ENCODE measurements at regions of chr17 and their contacts with region 1.

Region 1: GRCh38 chr17:40475234-40475908 is 26.1 kb downstream of the TNS4 start:
- DNase-seq: peak; percentile 7
- ATAC-seq: no peak
- H3K4me3 ChIP-seq: no peak overlapping the region
- H3K27ac ChIP-seq: no peak overlapping the region
- H3K4me1 ChIP-seq: peaks cover under 1% of the 10 kb centered on the region; the same call in 1 of the 2 replicates
- H3K27me3 ChIP-seq: no peaks in the 10 kb centered on the region
- CTCF ChIP-seq: no peak

Region 2: DNA sequence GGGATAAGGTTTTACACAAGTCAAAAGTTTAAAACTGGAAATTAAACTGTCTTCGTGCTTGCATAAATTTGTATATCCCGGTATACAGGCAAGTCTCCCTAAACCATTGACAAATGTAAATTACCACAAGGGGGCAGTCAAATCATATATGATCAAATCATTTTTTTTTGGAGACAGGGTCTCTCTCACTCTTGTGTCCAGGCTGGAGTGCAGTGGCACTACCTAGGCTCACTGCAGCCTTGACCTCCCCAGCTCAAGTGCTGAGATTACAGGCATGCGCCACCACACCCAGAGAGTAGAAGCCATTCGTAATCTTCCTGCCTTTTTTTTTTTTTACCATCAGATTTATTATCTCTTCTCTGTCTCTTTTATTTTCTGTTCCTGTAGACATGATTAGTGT is 76.2 kb before region 1 on chr17:
- CTCF ChIA-PET with region 1: no interaction called
- POLR2A ChIA-PET with region 1: no interaction called
- intact Hi-C with region 1: no loop called
- DNase-seq: peak; percentile 69
- ATAC-seq: peak; percentile 49; the same call in 1 of the 2 replicates
- H3K4me3 ChIP-seq: no peak overlapping the region
- H3K27ac ChIP-seq: no peak overlapping the region
- H3K4me1 ChIP-seq: no peaks in the 10 kb centered on the region
- H3K27me3 ChIP-seq: no peaks in the 10 kb centered on the region
- CTCF ChIP-seq: peak; percentile 65

Region 3: GRCh38 chr17:40410082-40410481 is 65.3 kb before region 1 on chr17:
- CTCF ChIA-PET with region 1: no interaction called
- POLR2A ChIA-PET with region 1: no interaction called
- intact Hi-C with region 1: no loop called
- DNase-seq: no peak
- ATAC-seq: no peak
- H3K4me3 ChIP-seq: no peak overlapping the region
- H3K27ac ChIP-seq: no peak overlapping the region
- H3K4me1 ChIP-seq: no peaks in the 10 kb centered on the region
- H3K27me3 ChIP-seq: no peaks in the 10 kb centered on the region
- CTCF ChIP-seq: no peak

Region 4: GRCh38 chr17:40432864-40433528 is 42.4 kb before region 1 on chr17:
- CTCF ChIA-PET with region 1: no interaction called
- POLR2A ChIA-PET with region 1: no interaction called
- intact Hi-C with region 1: no loop called
- DNase-seq: no peak
- ATAC-seq: no peak
- H3K4me3 ChIP-seq: no peak overlapping the region
- H3K27ac ChIP-seq: no peak overlapping the region
- H3K4me1 ChIP-seq: no peaks in the 10 kb centered on the region
- H3K27me3 ChIP-seq: no peaks in the 10 kb centered on the region
- CTCF ChIP-seq: no peak

Region 5: GRCh38 chr17:40443583-40444327 is 31.6 kb before region 1 on chr17:
- CTCF ChIA-PET with region 1: interaction called, 12 read pairs
- POLR2A ChIA-PET with region 1: no interaction called
- intact Hi-C with region 1: no loop called
- DNase-seq: peak; percentile 62
- ATAC-seq: peak; percentile 60
- H3K4me3 ChIP-seq: peak overlapping the region; percentile 93
- H3K27ac ChIP-seq: no peak overlapping the region
- H3K4me1 ChIP-seq: peaks cover 18% of the 10 kb centered on the region
- H3K27me3 ChIP-seq: no peaks in the 10 kb centered on the region
- CTCF ChIP-seq: peak; percentile 38

Region 6: DNA sequence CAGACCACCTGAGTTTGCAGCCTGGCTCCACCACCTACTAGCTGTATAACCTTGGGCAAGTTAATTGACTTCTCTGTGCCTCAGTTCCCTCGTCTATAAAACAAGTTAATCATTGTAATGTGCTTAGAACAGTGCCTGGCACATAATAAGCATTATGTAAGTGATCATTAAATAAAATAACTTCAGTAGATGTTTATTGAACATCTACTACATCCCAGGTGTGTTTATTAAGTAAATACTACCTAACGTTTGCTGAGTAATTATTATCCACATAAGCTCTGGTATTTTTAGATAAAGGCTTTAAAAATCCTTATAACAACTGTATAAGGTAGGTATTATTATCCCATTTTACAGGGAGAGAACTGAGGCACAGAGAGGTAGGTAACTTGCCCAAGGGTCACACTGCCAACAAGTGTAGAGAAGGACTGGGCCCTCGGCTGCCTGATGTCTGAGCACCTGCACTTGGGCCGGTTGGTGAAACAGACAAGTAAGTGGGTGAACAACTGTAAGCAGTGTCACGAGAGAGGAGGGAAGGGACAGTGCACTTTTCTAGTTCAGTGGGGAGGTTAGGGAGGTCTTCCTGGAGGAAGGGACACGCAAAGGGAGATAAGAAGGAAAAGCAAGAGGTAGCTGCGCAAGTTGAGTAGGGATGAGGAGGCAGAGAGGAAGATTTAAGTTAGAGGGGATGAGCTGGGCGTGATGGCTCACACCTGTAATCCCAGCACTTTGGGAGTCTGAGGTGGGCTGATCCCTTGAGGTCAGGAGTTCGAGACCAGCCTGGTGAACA is 21.5 kb after region 1 on chr17:
- CTCF ChIA-PET with region 1: no interaction called
- POLR2A ChIA-PET with region 1: no interaction called
- intact Hi-C with region 1: no loop called
- DNase-seq: no peak
- ATAC-seq: no peak
- H3K4me3 ChIP-seq: peak overlapping the region; percentile 81
- H3K27ac ChIP-seq: peak overlapping the region; percentile 54; the same call in 1 of the 2 replicates
- H3K4me1 ChIP-seq: peaks cover 47% of the 10 kb centered on the region
- H3K27me3 ChIP-seq: no peaks in the 10 kb centered on the region
- CTCF ChIP-seq: no peak

Measured in PC-3 (cell line).